ENCODE measurements at regions of chr13 and their contacts with region 1.

Region 1: GRCh38 chr13:74246487-74246886 is 112.3 kb upstream of the KLF12 start:
- DNase-seq: peak in 2 of 5 donors; percentile 26 to 56
- H3K4me3 ChIP-seq: no peak overlapping the region
- H3K4me3 Mint-ChIP-seq: peak overlapping the region; percentile 53 to 84 (median 69)
- H3K27ac ChIP-seq: peak overlapping the region; percentile 54
- H3K27ac Mint-ChIP-seq: peak overlapping the region; percentile 87 to 97 (median 94)
- H3K4me1 ChIP-seq: peaks cover 96% of the 10 kb centered on the region
- H3K4me1 Mint-ChIP-seq: peaks cover 79 to 100% (median 91%) of the 10 kb centered on the region in 4 donors
- H3K27me3 ChIP-seq: no peaks in the 10 kb centered on the region
- H3K27me3 Mint-ChIP-seq: no peaks in the 10 kb centered on the region

Region 2: GRCh38 chr13:74191410-74191809 is 55.1 kb before region 1 on chr13:
- CTCF ChIA-PET with region 1: no interaction called
- POLR2A ChIA-PET with region 1: interaction called, 3 read pairs
- intact Hi-C with region 1: loop called (anchors 5 kb)
- DNase-seq: no peak
- H3K4me3 ChIP-seq: no peak overlapping the region
- H3K4me3 Mint-ChIP-seq: no peak overlapping the region
- H3K27ac ChIP-seq: no peak overlapping the region
- H3K27ac Mint-ChIP-seq: no peak overlapping the region
- H3K4me1 ChIP-seq: peaks cover 12% of the 10 kb centered on the region
- H3K4me1 Mint-ChIP-seq: peaks cover 17 to 28% (median 19%) of the 10 kb centered on the region in 4 donors
- H3K27me3 ChIP-seq: no peaks in the 10 kb centered on the region
- H3K27me3 Mint-ChIP-seq: no peaks in the 10 kb centered on the region

Region 3: DNA sequence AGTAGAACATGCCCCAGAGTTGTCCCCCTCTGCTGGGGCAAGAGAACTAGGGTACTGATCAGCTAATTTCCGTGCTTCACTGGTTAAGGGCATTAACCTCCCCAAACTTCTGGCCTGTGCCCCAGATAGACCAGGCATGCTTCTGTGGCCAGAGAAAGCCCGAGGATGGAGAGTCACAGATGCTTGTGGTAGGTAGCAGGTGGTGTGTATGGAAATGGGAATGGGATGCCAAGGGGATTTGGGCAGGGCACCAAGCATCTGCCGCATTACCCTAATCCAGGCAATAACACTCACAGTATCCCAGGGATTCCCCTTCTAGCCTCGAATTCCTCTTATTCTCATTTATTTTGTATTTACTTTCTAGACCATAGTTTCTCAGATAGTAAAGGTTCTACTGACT is 12.5 kb after region 1 on chr13:
- CTCF ChIA-PET with region 1: interaction called, 5 read pairs
- POLR2A ChIA-PET with region 1: interaction called, 57 read pairs
- intact Hi-C with region 1: no loop called
- DNase-seq: no peak
- H3K4me3 ChIP-seq: no peak overlapping the region
- H3K4me3 Mint-ChIP-seq: peak overlapping the region in 4 of 8 donors; percentile 28 to 80 (median 52)
- H3K27ac ChIP-seq: no peak overlapping the region
- H3K27ac Mint-ChIP-seq: peak overlapping the region in 5 of 7 donors; percentile 24 to 80 (median 74)
- H3K4me1 ChIP-seq: peaks cover 59% of the 10 kb centered on the region
- H3K4me1 Mint-ChIP-seq: peaks cover 48 to 67% (median 54%) of the 10 kb centered on the region in 4 donors
- H3K27me3 ChIP-seq: no peaks in the 10 kb centered on the region
- H3K27me3 Mint-ChIP-seq: no peaks in the 10 kb centered on the region

Region 4: DNA sequence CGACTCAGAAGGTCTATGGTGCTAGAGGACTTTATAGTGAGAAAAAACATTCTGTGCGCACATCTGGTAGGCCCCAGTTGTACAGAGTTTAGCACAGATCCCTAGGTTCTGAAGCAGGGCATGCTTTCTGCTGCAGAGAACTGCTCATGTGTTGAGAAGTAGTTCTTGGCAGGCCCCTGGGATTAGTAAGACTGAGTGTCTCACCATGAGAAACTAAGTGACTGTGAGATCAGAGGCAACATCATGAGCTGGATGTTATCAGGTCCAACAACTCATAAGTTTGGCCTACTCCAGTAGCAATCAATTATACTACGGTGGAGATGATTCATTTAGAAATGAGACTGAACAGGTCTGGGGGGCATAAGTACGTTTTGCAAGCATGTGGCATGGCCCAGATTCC is 395.1 kb after region 1 on chr13:
- CTCF ChIA-PET with region 1: no interaction called
- POLR2A ChIA-PET with region 1: no interaction called
- intact Hi-C with region 1: no loop called
- DNase-seq: no peak
- H3K4me3 ChIP-seq: no peak overlapping the region
- H3K4me3 Mint-ChIP-seq: no peak overlapping the region
- H3K27ac ChIP-seq: no peak overlapping the region
- H3K27ac Mint-ChIP-seq: no peak overlapping the region
- H3K4me1 ChIP-seq: no peaks in the 10 kb centered on the region
- H3K4me1 Mint-ChIP-seq: peaks cover 0 to 2% (median 0%) of the 10 kb centered on the region in 4 donors
- H3K27me3 ChIP-seq: no peaks in the 10 kb centered on the region
- H3K27me3 Mint-ChIP-seq: peaks cover 0 to under 1% of the 10 kb centered on the region in 2 donors

Measured in CD4-positive, alpha-beta memory T cell (primary cell).